ENCODE measurements at regions of chr3 and their contacts with region 1.

Region 1: GRCh38 chr3:44210967-44211366 is 30.7 kb upstream of the TOPAZ1 start:
- DNase-seq: no peak
- H3K4me3 ChIP-seq: no peak overlapping the region
- H3K27ac ChIP-seq: no peak overlapping the region
- H3K4me1 ChIP-seq: no peaks in the 10 kb centered on the region
- H3K27me3 ChIP-seq: no peaks in the 10 kb centered on the region
- CTCF ChIP-seq: no peak

Region 2: DNA sequence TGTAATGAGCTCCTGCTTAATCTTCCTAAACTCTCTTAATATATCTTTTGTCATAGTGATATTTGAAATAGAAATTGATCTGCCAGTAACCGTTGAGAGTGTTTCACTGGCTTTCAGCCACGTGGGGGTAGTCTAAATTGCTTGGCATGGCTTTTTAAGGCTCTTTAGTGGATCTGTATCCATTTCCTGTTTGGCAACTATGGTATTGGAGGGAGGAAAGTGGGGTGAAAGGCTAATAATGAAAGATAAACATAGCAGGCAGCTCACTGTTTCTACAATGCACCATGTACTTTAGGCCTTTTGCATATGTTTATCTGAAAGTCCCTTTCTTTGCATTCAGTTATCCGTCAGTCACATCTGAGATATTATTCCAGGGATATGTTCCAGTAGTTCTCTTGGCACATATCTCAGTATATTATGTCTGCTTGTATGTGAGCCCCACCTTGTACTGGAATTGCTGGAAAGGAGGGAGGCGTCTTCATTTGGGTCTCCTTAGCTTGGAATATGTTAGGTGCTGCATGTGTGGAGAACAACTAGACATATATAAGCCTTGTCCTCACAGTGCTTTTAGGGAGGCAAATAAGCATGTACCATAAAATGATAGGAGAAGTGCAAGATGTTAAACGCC is 41.5 kb after region 1 on chr3:
- CTCF ChIA-PET with region 1: interaction called, 12 read pairs
- POLR2A ChIA-PET with region 1: no interaction called
- intact Hi-C with region 1: no loop called
- DNase-seq: no peak
- H3K4me3 ChIP-seq: no peak overlapping the region
- H3K27ac ChIP-seq: no peak overlapping the region
- H3K4me1 ChIP-seq: peaks cover 4% of the 10 kb centered on the region; the same call in 1 of the 2 replicates
- H3K27me3 ChIP-seq: no peaks in the 10 kb centered on the region
- CTCF ChIP-seq: no peak